K562 (cell line): ENCODE measurements at regions of chr11 and their contacts with region 1.

Region 1: GRCh38 chr11:60615497-60615896 is 83.9 kb upstream of the MS4A8 start:
- DNase-seq: no peak
- ATAC-seq: no peak
- H3K4me3 ChIP-seq: no peak overlapping the region
- H3K27ac ChIP-seq: no peak overlapping the region
- H3K4me1 ChIP-seq: peaks cover 0 to 4% of the 10 kb centered on the region in 2 experiments; a peak in 2 of 5 replicates
- H3K27me3 ChIP-seq: no peaks in the 10 kb centered on the region
- CTCF ChIP-seq: no peak
- EP300 ChIP-seq: no peak
- POLR2A ChIP-seq: no peak
- RAD21 ChIP-seq: no peak

Region 2: GRCh38 chr11:59822989-59823566 is 792.4 kb before region 1 on chr11:
- CTCF ChIA-PET with region 1: no interaction called
- POLR2A ChIA-PET with region 1: no interaction called
- in situ Hi-C with region 1: no loop called
- intact Hi-C with region 1: loop called (anchors 10 kb)
- DNase-seq: peak; percentile 42 to 86 (median 52)
- ATAC-seq: peak; percentile 96
- H3K4me3 ChIP-seq: no peak overlapping the region
- H3K27ac ChIP-seq: no peak overlapping the region; the same call in 2 of the 3 replicates
- H3K4me1 ChIP-seq: peaks cover 0 to 2% of the 10 kb centered on the region in 2 experiments; a peak in 2 of 5 replicates
- H3K27me3 ChIP-seq: no peaks in the 10 kb centered on the region
- CTCF ChIP-seq: peak; percentile 78 to 87 (median 81)
- EP300 ChIP-seq: no peak
- POLR2A ChIP-seq: no peak
- RAD21 ChIP-seq: peak; percentile 96 to 98

Region 3: DNA sequence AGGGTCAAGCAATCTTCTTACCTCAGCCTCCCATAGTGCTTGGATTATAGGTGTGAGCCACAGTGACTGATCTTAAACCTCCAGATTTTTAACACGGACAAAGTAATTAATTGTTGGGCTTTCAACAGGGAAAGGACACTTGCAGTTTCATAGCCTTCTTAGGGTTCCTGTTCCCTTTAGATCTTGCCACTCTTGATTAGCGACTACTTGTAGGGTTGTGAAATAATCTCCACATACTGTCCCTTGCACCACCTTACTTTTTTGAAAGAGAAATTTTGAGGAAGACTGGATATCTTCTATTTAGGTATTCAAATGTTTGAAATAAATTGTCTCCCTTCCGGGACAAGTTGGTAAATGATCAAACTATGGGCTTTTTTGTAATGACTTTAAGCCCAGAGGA is 380.2 kb before region 1 on chr11:
- CTCF ChIA-PET with region 1: no interaction called
- POLR2A ChIA-PET with region 1: no interaction called
- in situ Hi-C with region 1: no loop called
- intact Hi-C with region 1: no loop called
- DNase-seq: no peak
- ATAC-seq: no peak
- H3K4me3 ChIP-seq: no peak overlapping the region
- H3K27ac ChIP-seq: no peak overlapping the region
- H3K4me1 ChIP-seq: 0 out of 5 replicates have a peak, but pooled peaks cover 0 to 2% of the 10 kb centered on the region in 2 experiments
- H3K27me3 ChIP-seq: no peaks in the 10 kb centered on the region
- CTCF ChIP-seq: no peak
- EP300 ChIP-seq: no peak
- POLR2A ChIP-seq: no peak
- RAD21 ChIP-seq: no peak

Region 4: DNA sequence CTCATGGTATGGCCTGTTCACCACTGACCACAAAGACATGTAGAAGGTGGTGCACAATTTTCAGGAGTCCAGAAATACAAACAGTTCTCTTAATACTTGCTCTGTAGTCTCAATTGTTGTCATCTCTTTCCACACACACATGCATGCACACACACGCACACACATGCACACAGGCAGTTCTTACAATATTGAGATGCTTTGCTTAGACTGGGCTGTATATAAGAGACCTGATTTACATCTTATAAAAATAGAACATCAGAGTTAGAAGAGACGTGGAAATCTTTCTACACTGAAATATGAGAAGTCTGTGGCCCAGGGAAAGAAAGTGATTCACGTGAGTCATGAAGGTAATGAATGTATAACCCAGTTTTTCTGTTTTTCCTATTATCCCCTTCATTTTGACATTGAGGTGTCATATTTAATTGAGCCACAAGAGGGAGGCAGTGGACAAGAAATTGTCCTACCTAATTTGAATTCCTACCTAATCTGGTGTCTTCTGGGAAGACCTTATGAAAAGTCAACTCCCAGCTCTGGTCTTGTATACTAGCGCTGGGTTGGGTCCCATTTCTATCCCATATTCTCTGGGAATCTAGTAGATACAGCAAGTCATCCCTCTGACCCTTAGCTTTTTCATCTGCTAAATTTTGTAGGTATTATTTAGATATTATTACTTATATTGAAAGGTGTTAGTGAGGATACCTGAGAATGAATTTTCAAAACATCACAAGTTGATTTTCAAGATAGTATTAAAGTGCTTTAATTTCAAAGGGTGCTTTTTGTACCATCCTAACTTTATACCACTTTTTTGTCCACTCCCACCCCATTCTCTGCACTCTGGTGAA is 349.9 kb before region 1 on chr11:
- CTCF ChIA-PET with region 1: no interaction called
- POLR2A ChIA-PET with region 1: no interaction called
- in situ Hi-C with region 1: no loop called
- intact Hi-C with region 1: loop called (anchors 2 kb)
- DNase-seq: peak; percentile 52 to 62 (median 58)
- ATAC-seq: peak; percentile 76
- H3K4me3 ChIP-seq: no peak overlapping the region
- H3K27ac ChIP-seq: no peak overlapping the region
- H3K4me1 ChIP-seq: no peaks in the 10 kb centered on the region; a peak in 1 of 5 replicates
- H3K27me3 ChIP-seq: peaks cover 0 to 6% of the 10 kb centered on the region in 2 experiments; a peak in 1 of 5 replicates
- CTCF ChIP-seq: peak; percentile 58 to 81 (median 76); a peak in 5 of 6 replicates
- EP300 ChIP-seq: no peak
- POLR2A ChIP-seq: no peak
- RAD21 ChIP-seq: peak; percentile 69 to 82

Region 5: GRCh38 chr11:60334005-60334620 is 281.4 kb before region 1 on chr11:
- CTCF ChIA-PET with region 1: interaction called, 3 read pairs
- POLR2A ChIA-PET with region 1: no interaction called
- in situ Hi-C with region 1: no loop called
- intact Hi-C with region 1: loop called (anchors 5 kb)
- DNase-seq: peak; percentile 58 to 74 (median 62)
- ATAC-seq: peak; percentile 87
- H3K4me3 ChIP-seq: no peak overlapping the region
- H3K27ac ChIP-seq: no peak overlapping the region
- H3K4me1 ChIP-seq: no peaks in the 10 kb centered on the region; a peak in 1 of 5 replicates
- H3K27me3 ChIP-seq: no peaks in the 10 kb centered on the region
- CTCF ChIP-seq: peak; percentile 72 to 75 (median 72)
- EP300 ChIP-seq: no peak
- POLR2A ChIP-seq: no peak
- RAD21 ChIP-seq: peak; percentile 16 to 42; a peak in 2 of 4 replicates

Region 6: DNA sequence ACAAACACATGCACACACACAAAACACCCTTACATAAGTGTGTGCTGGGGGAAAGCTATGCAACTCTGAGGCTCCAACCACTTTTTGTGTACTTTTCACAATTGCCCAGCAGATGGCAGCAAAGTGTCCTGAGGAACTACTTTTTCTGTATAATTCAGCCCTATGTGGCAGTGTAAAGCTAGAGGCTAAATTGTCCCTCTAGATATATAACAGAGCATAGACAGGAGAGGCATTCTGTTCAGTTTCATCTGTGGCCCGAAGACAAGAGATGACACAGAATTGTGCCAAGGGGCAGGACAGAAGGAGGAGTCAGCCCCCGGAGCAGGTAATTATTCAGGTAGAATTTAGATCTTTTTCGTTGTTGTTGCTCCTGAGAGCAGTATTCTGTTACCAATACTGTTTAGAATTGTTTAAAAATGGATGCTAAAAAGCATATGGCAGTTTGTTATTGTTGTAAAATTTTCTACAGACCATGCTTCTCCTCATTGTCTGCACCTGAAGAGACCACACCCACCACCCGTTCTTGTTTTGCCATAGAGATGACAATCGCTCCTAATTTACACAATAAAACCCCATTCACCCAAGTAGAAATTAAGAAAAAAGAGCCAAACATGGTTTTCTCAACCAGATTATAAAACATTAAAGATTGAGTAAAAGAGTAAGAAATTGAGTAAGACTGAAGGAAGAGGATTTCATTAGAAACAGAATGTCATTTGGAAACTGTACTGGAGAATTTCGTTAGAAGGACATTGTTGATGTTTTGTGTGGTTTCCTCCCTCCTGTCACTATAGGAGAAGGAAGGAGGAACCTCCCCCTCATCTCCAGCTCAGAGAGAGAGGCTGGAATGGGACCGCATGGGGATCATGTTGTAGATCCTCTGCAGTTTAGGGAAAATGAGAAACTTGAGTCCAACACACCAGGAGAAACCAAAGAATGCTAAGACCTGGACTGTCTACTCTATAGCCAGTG is 251.7 kb before region 1 on chr11:
- CTCF ChIA-PET with region 1: interaction called, 8 read pairs
- POLR2A ChIA-PET with region 1: no interaction called
- in situ Hi-C with region 1: no loop called
- intact Hi-C with region 1: loop called (anchors 1 kb)
- DNase-seq: peak; percentile 47 to 63 (median 49)
- ATAC-seq: peak; percentile 88
- H3K4me3 ChIP-seq: no peak overlapping the region
- H3K27ac ChIP-seq: no peak overlapping the region
- H3K4me1 ChIP-seq: no peaks in the 10 kb centered on the region
- H3K27me3 ChIP-seq: peaks cover 0 to 13% of the 10 kb centered on the region in 2 experiments; a peak in 2 of 5 replicates
- CTCF ChIP-seq: peak; percentile 72 to 76 (median 76)
- EP300 ChIP-seq: no peak
- POLR2A ChIP-seq: no peak
- RAD21 ChIP-seq: peak; percentile 50 to 70

Region 7: GRCh38 chr11:60485986-60486385 is 129.5 kb before region 1 on chr11:
- CTCF ChIA-PET with region 1: no interaction called
- POLR2A ChIA-PET with region 1: no interaction called
- in situ Hi-C with region 1: no loop called
- intact Hi-C with region 1: loop called (anchors 10 kb)
- DNase-seq: peak; percentile 57 to 64 (median 62)
- ATAC-seq: peak; percentile 100
- H3K4me3 ChIP-seq: no peak overlapping the region
- H3K27ac ChIP-seq: no peak overlapping the region
- H3K4me1 ChIP-seq: no peaks in the 10 kb centered on the region
- H3K27me3 ChIP-seq: no peaks in the 10 kb centered on the region
- CTCF ChIP-seq: peak; percentile 88 to 99 (median 99)
- EP300 ChIP-seq: no peak
- POLR2A ChIP-seq: no peak
- RAD21 ChIP-seq: peak; percentile 46 to 65